ENCODE measurements at regions of chr17 and their contacts with region 1.

Region 1: GRCh38 chr17:40531051-40531991 is 29.9 kb upstream of the TNS4 start:
- H3K4me3 ChIP-seq: no peak overlapping the region
- H3K27ac ChIP-seq: no peak overlapping the region
- H3K4me1 ChIP-seq: no peaks in the 10 kb centered on the region
- CTCF ChIP-seq: no peak

Region 2: GRCh38 chr17:40362696-40363110 is 168.6 kb before region 1 on chr17:
- CTCF ChIA-PET with region 1: interaction called, 91 read pairs
- POLR2A ChIA-PET with region 1: interaction called, 6 read pairs
- H3K4me3 ChIP-seq: peak overlapping the region; percentile 50
- H3K27ac ChIP-seq: peak overlapping the region; percentile 70; the same call in 1 of the 2 replicates
- H3K4me1 ChIP-seq: no peaks in the 10 kb centered on the region
- CTCF ChIP-seq: peak; percentile 97

Region 3: DNA sequence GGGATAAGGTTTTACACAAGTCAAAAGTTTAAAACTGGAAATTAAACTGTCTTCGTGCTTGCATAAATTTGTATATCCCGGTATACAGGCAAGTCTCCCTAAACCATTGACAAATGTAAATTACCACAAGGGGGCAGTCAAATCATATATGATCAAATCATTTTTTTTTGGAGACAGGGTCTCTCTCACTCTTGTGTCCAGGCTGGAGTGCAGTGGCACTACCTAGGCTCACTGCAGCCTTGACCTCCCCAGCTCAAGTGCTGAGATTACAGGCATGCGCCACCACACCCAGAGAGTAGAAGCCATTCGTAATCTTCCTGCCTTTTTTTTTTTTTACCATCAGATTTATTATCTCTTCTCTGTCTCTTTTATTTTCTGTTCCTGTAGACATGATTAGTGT is 132.1 kb before region 1 on chr17:
- CTCF ChIA-PET with region 1: interaction called, 50 read pairs
- POLR2A ChIA-PET with region 1: interaction called, 4 read pairs
- H3K4me3 ChIP-seq: no peak overlapping the region
- H3K27ac ChIP-seq: no peak overlapping the region
- H3K4me1 ChIP-seq: no peaks in the 10 kb centered on the region
- CTCF ChIP-seq: no peak

Region 4: GRCh38 chr17:40450175-40450574 is 81.1 kb before region 1 on chr17:
- CTCF ChIA-PET with region 1: interaction called, 194 read pairs
- POLR2A ChIA-PET with region 1: interaction called, 3 read pairs
- H3K4me3 ChIP-seq: no peak overlapping the region
- H3K27ac ChIP-seq: no peak overlapping the region
- H3K4me1 ChIP-seq: no peaks in the 10 kb centered on the region
- CTCF ChIP-seq: peak; percentile 60

Region 5: GRCh38 chr17:40490289-40490853 is 41.0 kb before region 1 on chr17:
- CTCF ChIA-PET with region 1: interaction called, 23 read pairs
- POLR2A ChIA-PET with region 1: interaction called, 5 read pairs
- H3K4me3 ChIP-seq: no peak overlapping the region
- H3K27ac ChIP-seq: no peak overlapping the region; the same call in 1 of the 2 replicates
- H3K4me1 ChIP-seq: peaks cover 17% of the 10 kb centered on the region
- CTCF ChIP-seq: no peak

Region 6: GRCh38 chr17:40559954-40560591 is 28.8 kb after region 1 on chr17:
- CTCF ChIA-PET with region 1: interaction called, 140 read pairs
- POLR2A ChIA-PET with region 1: no interaction called
- H3K4me3 ChIP-seq: no peak overlapping the region
- H3K27ac ChIP-seq: no peak overlapping the region
- H3K4me1 ChIP-seq: no peaks in the 10 kb centered on the region
- CTCF ChIP-seq: peak; percentile 97

Region 7: DNA sequence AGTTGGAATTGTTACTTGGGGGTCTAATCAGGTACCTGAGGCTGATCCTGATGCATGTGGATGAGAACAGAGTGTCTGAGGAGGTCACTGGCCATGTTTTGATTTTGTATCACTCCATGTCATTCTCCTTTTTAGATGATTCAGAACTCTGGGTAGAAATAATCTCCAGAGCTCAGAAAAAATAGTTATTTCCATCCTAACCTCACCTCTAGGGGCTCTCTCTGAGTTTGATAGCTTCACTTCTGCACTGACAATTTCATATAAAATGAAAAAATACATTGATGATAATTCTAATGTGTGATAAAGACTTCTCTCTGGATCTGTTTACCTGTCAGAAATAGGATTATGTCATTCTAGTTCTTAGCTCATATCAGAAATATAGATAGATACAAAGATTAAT is 341.9 kb after region 1 on chr17:
- CTCF ChIA-PET with region 1: no interaction called
- POLR2A ChIA-PET with region 1: no interaction called
- H3K4me3 ChIP-seq: no peak overlapping the region
- H3K27ac ChIP-seq: no peak overlapping the region
- H3K4me1 ChIP-seq: no peaks in the 10 kb centered on the region
- CTCF ChIP-seq: no peak